Activated CD4-positive, alpha-beta T cell treated with anti-CD3 and anti-CD28 coated beads for 36 hours (primary cell): ENCODE measurements at regions of chr10 and their contacts with region 1.

Region 1: DNA sequence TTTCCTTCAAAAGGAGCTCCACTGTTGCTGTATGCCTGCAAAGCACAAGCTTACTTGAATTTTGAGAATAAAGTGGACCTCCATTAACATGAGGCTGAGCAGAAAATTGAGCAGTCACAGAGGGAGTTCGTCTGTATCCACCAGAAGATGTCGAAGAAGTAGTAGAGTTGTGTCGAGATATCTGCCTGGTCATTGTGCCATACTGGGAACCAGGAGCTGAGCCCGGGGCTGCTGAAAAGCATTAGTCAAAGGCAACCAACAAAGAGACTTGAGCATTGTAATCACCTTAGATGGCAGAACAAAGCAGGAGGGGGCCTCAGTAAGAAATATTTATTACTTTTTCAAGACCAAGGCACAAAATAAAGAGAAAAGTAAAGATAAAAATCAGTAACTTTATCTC is 61.5 kb downstream of the PDSS1 start:
- DNase-seq: no peak
- ATAC-seq: no peak
- H3K4me3 Mint-ChIP-seq: no peak overlapping the region
- H3K27ac Mint-ChIP-seq: no peak overlapping the region
- H3K4me1 Mint-ChIP-seq: peaks cover 7% of the 10 kb centered on the region
- H3K27me3 Mint-ChIP-seq: no peaks in the 10 kb centered on the region

Region 2: GRCh38 chr10:26733750-26734568 is 25.0 kb before region 1 on chr10:
- CTCF ChIA-PET with region 1: no interaction called
- POLR2A ChIA-PET with region 1: no interaction called
- intact Hi-C with region 1: no loop called
- DNase-seq: no peak
- ATAC-seq: no peak
- H3K4me3 Mint-ChIP-seq: no peak overlapping the region
- H3K27ac Mint-ChIP-seq: no peak overlapping the region
- H3K4me1 Mint-ChIP-seq: peaks cover 26% of the 10 kb centered on the region
- H3K27me3 Mint-ChIP-seq: no peaks in the 10 kb centered on the region

Region 3: GRCh38 chr10:26773633-26774032 is 14.6 kb after region 1 on chr10:
- CTCF ChIA-PET with region 1: interaction called, 10 read pairs
- POLR2A ChIA-PET with region 1: no interaction called
- intact Hi-C with region 1: no loop called
- DNase-seq: no peak
- ATAC-seq: no peak
- H3K4me3 Mint-ChIP-seq: no peak overlapping the region
- H3K27ac Mint-ChIP-seq: peak overlapping the region; percentile 11
- H3K4me1 Mint-ChIP-seq: peaks cover 48% of the 10 kb centered on the region
- H3K27me3 Mint-ChIP-seq: no peaks in the 10 kb centered on the region